ENCODE measurements at regions of chr12 and their contacts with region 1.

Region 1: DNA sequence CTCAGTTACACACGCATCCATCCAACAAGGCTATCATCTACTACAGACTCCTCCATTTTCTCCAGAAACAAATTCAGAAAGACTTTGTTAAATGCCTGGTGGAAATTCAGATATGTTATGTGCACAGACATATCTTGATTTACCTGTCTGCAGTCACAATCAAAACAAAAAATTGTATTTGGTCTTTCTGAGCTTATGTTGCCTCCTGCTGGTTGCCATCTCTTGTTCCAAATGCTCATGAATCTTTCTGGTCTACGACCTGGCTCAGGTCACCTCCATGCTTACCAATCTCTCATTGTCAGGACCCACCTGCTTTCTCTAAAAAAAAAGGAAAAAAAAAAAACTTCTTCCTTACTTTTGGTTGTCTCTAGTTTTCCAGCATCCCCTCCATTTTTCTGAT is 169.2 kb upstream of the PLXNC1 start:
- DNase-seq: peak in 4 of 9 donors; percentile 21 to 51 (median 31)
- ATAC-seq: peak; percentile 27
- H3K4me3 ChIP-seq: no peak overlapping the region
- H3K4me3 Mint-ChIP-seq: no peak overlapping the region
- H3K27ac ChIP-seq: no peak overlapping the region
- H3K27ac Mint-ChIP-seq: peak overlapping the region in 1 of 9 donors; percentile 27
- H3K4me1 ChIP-seq: no peaks in the 10 kb centered on the region
- H3K4me1 Mint-ChIP-seq: peaks cover 13 to 48% (median 30%) of the 10 kb centered on the region in 7 donors
- H3K27me3 ChIP-seq: no peaks in the 10 kb centered on the region
- H3K27me3 Mint-ChIP-seq: peaks cover 0 to 6% (median 0%) of the 10 kb centered on the region in 5 donors

Region 2: GRCh38 chr12:93766796-93767523 is 212.2 kb before region 1 on chr12:
- CTCF ChIA-PET with region 1: no interaction called
- POLR2A ChIA-PET with region 1: no interaction called
- intact Hi-C with region 1: loop called (anchors 1 to 5 kb)
- DNase-seq: peak in 6 of 9 donors; percentile 23 to 58 (median 28)
- ATAC-seq: peak; percentile 84
- H3K4me3 ChIP-seq: no peak overlapping the region
- H3K4me3 Mint-ChIP-seq: peak overlapping the region in 5 of 10 donors; percentile 0 to 53 (median 6)
- H3K27ac ChIP-seq: no peak overlapping the region
- H3K27ac Mint-ChIP-seq: peak overlapping the region in 7 of 9 donors; percentile 6 to 74 (median 27)
- H3K4me1 ChIP-seq: no peaks in the 10 kb centered on the region
- H3K4me1 Mint-ChIP-seq: peaks cover 11 to 53% (median 17%) of the 10 kb centered on the region in 7 donors
- H3K27me3 ChIP-seq: no peaks in the 10 kb centered on the region
- H3K27me3 Mint-ChIP-seq: no peaks in the 10 kb centered on the region

Region 3: GRCh38 chr12:93847517-93848474 is 131.4 kb before region 1 on chr12:
- CTCF ChIA-PET with region 1: no interaction called
- POLR2A ChIA-PET with region 1: no interaction called
- intact Hi-C with region 1: no loop called
- DNase-seq: no peak
- ATAC-seq: peak; percentile 40
- H3K4me3 ChIP-seq: no peak overlapping the region
- H3K4me3 Mint-ChIP-seq: peak overlapping the region in 2 of 10 donors; percentile 59 to 68
- H3K27ac ChIP-seq: no peak overlapping the region
- H3K27ac Mint-ChIP-seq: peak overlapping the region in 3 of 9 donors; percentile 31 to 85 (median 46)
- H3K4me1 ChIP-seq: peaks cover 0 to 13% of the 10 kb centered on the region in 2 donors
- H3K4me1 Mint-ChIP-seq: peaks cover 12 to 61% (median 23%) of the 10 kb centered on the region in 7 donors
- H3K27me3 ChIP-seq: no peaks in the 10 kb centered on the region
- H3K27me3 Mint-ChIP-seq: no peaks in the 10 kb centered on the region

Measured in naive thymus-derived CD4-positive, alpha-beta T cell (primary cell).